Aorta (tissue), 5 donors: ENCODE measurements at regions of chr17 and their contacts with region 1.

Region 1: GRCh38 chr17:48024937-48025906 is 12.4 kb downstream of the COPZ2 start:
- DNase-seq: peak; percentile 99
- ATAC-seq: peak; percentile 94
- H3K4me3 ChIP-seq: no peak overlapping the region
- H3K27ac ChIP-seq: peak overlapping the region in 1 of 2 donors; percentile 4
- H3K4me1 ChIP-seq: no peaks in the 10 kb centered on the region
- H3K27me3 ChIP-seq: no peaks in the 10 kb centered on the region

Region 2: GRCh38 chr17:47663912-47664625 is 361.2 kb before region 1 on chr17:
- intact Hi-C with region 1: no loop called
- DNase-seq: no peak
- ATAC-seq: peak; percentile 76
- H3K4me3 ChIP-seq: no peak overlapping the region
- H3K27ac ChIP-seq: no peak overlapping the region
- H3K4me1 ChIP-seq: no peaks in the 10 kb centered on the region
- H3K27me3 ChIP-seq: no peaks in the 10 kb centered on the region

Region 3: GRCh38 chr17:47889734-47890529 is 135.3 kb before region 1 on chr17:
- intact Hi-C with region 1: loop called in 1 of 2 experiments (anchors 5 kb)
- DNase-seq: peak; percentile 92 to 96
- ATAC-seq: peak; percentile 92
- H3K4me3 ChIP-seq: no peak overlapping the region
- H3K27ac ChIP-seq: no peak overlapping the region
- H3K4me1 ChIP-seq: no peaks in the 10 kb centered on the region
- H3K27me3 ChIP-seq: no peaks in the 10 kb centered on the region

Region 4: DNA sequence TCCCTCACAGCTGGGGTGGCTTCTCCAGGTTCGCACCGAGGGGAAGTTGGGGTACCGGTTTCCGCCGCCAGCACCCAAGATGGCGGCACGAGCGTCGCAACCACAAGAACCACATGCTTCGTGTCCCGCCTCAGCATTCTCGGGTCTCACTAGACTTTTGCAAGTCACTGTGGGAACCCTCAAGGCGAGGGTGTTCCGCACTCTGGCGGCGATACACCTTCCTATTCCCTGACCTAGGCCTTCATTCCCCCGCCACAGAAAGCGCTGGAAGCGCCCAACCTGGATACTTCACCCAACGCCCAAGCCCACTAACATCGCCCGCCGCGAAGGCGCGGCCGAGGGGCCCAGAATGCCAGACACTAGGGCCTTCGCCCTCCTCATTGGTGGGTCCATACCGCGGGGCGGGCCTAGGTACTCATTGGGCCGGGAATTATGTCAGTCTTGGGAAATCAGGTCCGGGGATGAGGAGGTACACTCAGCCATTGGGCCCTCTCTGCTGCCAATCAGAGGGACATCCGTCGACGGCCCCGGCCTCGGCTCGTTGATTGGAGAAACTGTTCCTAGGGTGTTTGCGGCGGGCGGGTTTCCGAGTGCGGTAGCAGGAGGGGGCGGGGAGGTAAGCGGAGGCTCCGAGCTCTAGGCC is 22.6 kb after region 1 on chr17 and contains the start of gene NFE2L1:
- intact Hi-C with region 1: loop called in 1 of 2 experiments (anchors 2 kb)
- DNase-seq: peak; percentile 99 to 100
- ATAC-seq: peak; percentile 95
- H3K4me3 ChIP-seq: peak within 1 kb of the TSS; percentile 59 to 92
- H3K27ac ChIP-seq: peak within 1 kb of the TSS; percentile 61 to 97
- H3K4me1 ChIP-seq: peaks cover 2 to 7% of the 10 kb centered on the region in 2 donors
- H3K27me3 ChIP-seq: no peaks in the 10 kb centered on the region
- total RNA-seq, gene NFE2L1: 161 to 250 TPM

Region 5: GRCh38 chr17:48131216-48131824 is 106.1 kb after region 1 on chr17:
- intact Hi-C with region 1: loop called (anchors 1 kb)
- DNase-seq: no peak
- ATAC-seq: peak; percentile 86
- H3K4me3 ChIP-seq: no peak overlapping the region
- H3K27ac ChIP-seq: no peak overlapping the region
- H3K4me1 ChIP-seq: no peaks in the 10 kb centered on the region
- H3K27me3 ChIP-seq: no peaks in the 10 kb centered on the region